Mammary epithelial cell (primary cell): ENCODE measurements at regions of chr7 and their contacts with region 1.

Region 1: GRCh38 chr7:138654616-138655015 is 46.5 kb downstream of the SVOPL start:
- DNase-seq: no peak
- H3K4me3 ChIP-seq: no peak overlapping the region
- H3K27ac ChIP-seq: no peak overlapping the region
- H3K4me1 ChIP-seq: no peaks in the 10 kb centered on the region
- H3K27me3 ChIP-seq: no peaks in the 10 kb centered on the region
- CTCF ChIP-seq: no peak

Region 2: DNA sequence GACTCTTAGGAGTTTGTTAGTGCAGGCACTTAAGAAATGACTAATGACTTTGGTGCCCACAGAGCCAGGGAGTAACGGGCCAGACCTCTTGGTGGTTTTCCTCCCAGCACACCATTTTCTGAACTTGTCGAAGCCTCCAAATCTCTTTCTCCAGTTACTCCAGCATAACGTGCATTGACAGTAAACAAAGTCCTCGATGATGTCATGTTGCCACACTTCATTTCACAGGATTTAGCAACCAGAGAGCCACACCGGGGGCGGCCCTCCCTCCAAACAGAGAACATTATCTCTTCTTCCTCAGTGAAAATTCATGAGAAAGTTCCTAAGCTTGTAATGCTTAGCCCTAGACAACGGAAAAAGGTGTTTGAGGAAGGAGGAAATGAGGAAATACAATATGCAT is 50.6 kb after region 1 on chr7:
- CTCF ChIA-PET with region 1: no interaction called
- dilution Hi-C with region 1: loop called (anchors 5 kb)
- in situ Hi-C with region 1: no loop called
- intact Hi-C with region 1: no loop called
- DNase-seq: no peak
- H3K4me3 ChIP-seq: no peak overlapping the region
- H3K27ac ChIP-seq: no peak overlapping the region
- H3K4me1 ChIP-seq: peaks cover 5% of the 10 kb centered on the region
- H3K27me3 ChIP-seq: no peaks in the 10 kb centered on the region
- CTCF ChIP-seq: no peak